ENCODE measurements at regions of chr19 and their contacts with region 1.

Region 1: GRCh38 chr19:10251792-10252694 is at the start of gene MRPL4:
- DNase-seq: peak; percentile 97
- ATAC-seq: peak; percentile 94
- H3K4me3 ChIP-seq: peak within 1 kb of the TSS; percentile 98 to 99
- H3K27ac ChIP-seq: peak within 1 kb of the TSS; percentile 82
- H3K4me1 ChIP-seq: peaks cover 7 to 32% of the 10 kb centered on the region in 2 experiments; a peak in 3 of 4 replicates
- H3K27me3 ChIP-seq: no peaks in the 10 kb centered on the region
- CTCF ChIP-seq: no peak
- POLR2A ChIP-seq: no peak
- RAD21 ChIP-seq: no peak
- total RNA-seq, gene MRPL4: 146 TPM

Region 2: GRCh38 chr19:10095948-10096621 is 156.0 kb before region 1 on chr19:
- CTCF ChIA-PET with region 1: interaction called, 9 read pairs
- POLR2A ChIA-PET with region 1: interaction called, 3 read pairs
- RAD21 ChIA-PET with region 1: interaction called in 1 of 2 experiments, 3 read pairs
- intact Hi-C with region 1: loop called (anchors 1 kb)
- DNase-seq: peak; percentile 75
- ATAC-seq: peak; percentile 89
- H3K4me3 ChIP-seq: no peak overlapping the region
- H3K27ac ChIP-seq: peak overlapping the region; percentile 44; the same call in 1 of the 2 replicates
- H3K4me1 ChIP-seq: peaks cover 11 to 16% of the 10 kb centered on the region in 2 experiments
- H3K27me3 ChIP-seq: no peaks in the 10 kb centered on the region
- CTCF ChIP-seq: no peak
- POLR2A ChIP-seq: peak; percentile 66
- RAD21 ChIP-seq: no peak

Region 3: DNA sequence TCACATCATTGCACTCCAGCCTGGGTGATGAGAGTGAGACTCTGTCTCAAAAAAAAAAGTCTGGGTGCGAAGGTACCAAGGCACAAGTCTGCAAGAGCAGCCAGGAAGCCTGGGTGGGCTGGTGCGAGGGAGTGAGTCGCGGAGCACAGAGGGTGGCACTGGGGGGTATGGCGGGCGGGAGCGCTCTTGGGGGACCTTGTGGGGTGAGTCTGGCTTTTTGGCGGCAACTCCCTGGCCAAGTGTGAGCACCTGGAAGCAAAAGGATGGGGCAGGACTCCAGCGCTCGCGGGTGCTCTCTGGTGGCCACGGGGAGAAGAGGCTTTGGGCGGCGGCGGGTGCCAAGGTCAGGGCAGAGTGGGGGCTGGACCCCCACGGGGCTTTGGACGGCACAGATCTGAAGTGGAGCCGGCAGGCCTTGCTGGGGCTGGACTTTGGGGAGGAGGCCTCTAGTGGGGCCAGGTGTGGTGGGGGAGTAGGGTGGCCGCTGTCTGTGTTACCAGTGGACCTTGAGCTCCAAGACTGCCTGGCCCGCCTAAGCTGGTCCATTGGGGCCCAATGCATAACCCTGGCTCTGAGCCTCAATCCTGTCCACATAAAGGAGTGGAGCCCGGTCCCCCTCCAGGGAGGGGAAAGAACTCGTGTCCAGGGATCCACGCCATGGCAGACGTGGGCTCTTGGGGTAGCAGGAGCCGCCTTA is 139.0 kb before region 1 on chr19:
- CTCF ChIA-PET with region 1: interaction called, 10 read pairs
- POLR2A ChIA-PET with region 1: no interaction called
- RAD21 ChIA-PET with region 1: no interaction called
- intact Hi-C with region 1: no loop called
- DNase-seq: no peak
- ATAC-seq: peak; percentile 70
- H3K4me3 ChIP-seq: no peak overlapping the region
- H3K27ac ChIP-seq: peak overlapping the region; percentile 63
- H3K4me1 ChIP-seq: peaks cover 0 to 36% of the 10 kb centered on the region in 2 experiments; a peak in 2 of 4 replicates
- H3K27me3 ChIP-seq: no peaks in the 10 kb centered on the region
- CTCF ChIP-seq: peak in 2 of 3 experiments; percentile 80 to 86; a peak in 4 of 6 replicates
- POLR2A ChIP-seq: no peak
- RAD21 ChIP-seq: no peak; the same call in 1 of the 2 replicates

Region 4: GRCh38 chr19:10120538-10121189 is 131.4 kb before region 1 on chr19:
- CTCF ChIA-PET with region 1: interaction called, 3 read pairs
- POLR2A ChIA-PET with region 1: interaction called, 3 read pairs
- RAD21 ChIA-PET with region 1: interaction called in 1 of 2 experiments, 9 read pairs
- intact Hi-C with region 1: loop called (anchors 2 kb)
- DNase-seq: no peak
- ATAC-seq: no peak
- H3K4me3 ChIP-seq: no peak overlapping the region
- H3K27ac ChIP-seq: no peak overlapping the region
- H3K4me1 ChIP-seq: peaks cover 5 to 16% of the 10 kb centered on the region in 2 experiments
- H3K27me3 ChIP-seq: no peaks in the 10 kb centered on the region
- CTCF ChIP-seq: no peak
- POLR2A ChIP-seq: no peak
- RAD21 ChIP-seq: no peak

Region 5: GRCh38 chr19:10194500-10195289 is 57.3 kb before region 1 on chr19 and contains the start of gene DNMT1:
- CTCF ChIA-PET with region 1: interaction called, 3 read pairs
- POLR2A ChIA-PET with region 1: no interaction called
- RAD21 ChIA-PET with region 1: interaction called, 4 read pairs
- intact Hi-C with region 1: loop called (anchors 2 kb)
- DNase-seq: peak; percentile 94
- ATAC-seq: peak; percentile 95
- H3K4me3 ChIP-seq: peak within 1 kb of the TSS; percentile 88 to 98
- H3K27ac ChIP-seq: peak within 1 kb of the TSS; percentile 85
- H3K4me1 ChIP-seq: peaks cover 11 to 16% of the 10 kb centered on the region in 2 experiments; a peak in 2 of 4 replicates
- H3K27me3 ChIP-seq: no peaks in the 10 kb centered on the region
- CTCF ChIP-seq: no peak
- POLR2A ChIP-seq: peak; percentile 85
- RAD21 ChIP-seq: no peak
- total RNA-seq, gene DNMT1: 235 TPM

Region 6: GRCh38 chr19:10219678-10220077 is 32.4 kb before region 1 on chr19:
- CTCF ChIA-PET with region 1: no interaction called
- POLR2A ChIA-PET with region 1: interaction called, 3 read pairs
- RAD21 ChIA-PET with region 1: no interaction called
- intact Hi-C with region 1: loop called (anchors 1 kb)
- DNase-seq: no peak
- ATAC-seq: peak; percentile 85
- H3K4me3 ChIP-seq: no peak overlapping the region
- H3K27ac ChIP-seq: no peak overlapping the region
- H3K4me1 ChIP-seq: peaks cover 0 to 2% of the 10 kb centered on the region in 2 experiments; a peak in 2 of 4 replicates
- H3K27me3 ChIP-seq: no peaks in the 10 kb centered on the region
- CTCF ChIP-seq: peak; percentile 11 to 61 (median 49); a peak in 5 of 6 replicates
- POLR2A ChIP-seq: no peak
- RAD21 ChIP-seq: peak; percentile 27; the same call in 1 of the 2 replicates

Region 7: GRCh38 chr19:10644260-10645007 is 392.4 kb after region 1 on chr19:
- CTCF ChIA-PET with region 1: no interaction called
- POLR2A ChIA-PET with region 1: no interaction called
- RAD21 ChIA-PET with region 1: no interaction called
- intact Hi-C with region 1: no loop called
- DNase-seq: peak; percentile 35
- ATAC-seq: peak; percentile 95
- H3K4me3 ChIP-seq: no peak overlapping the region
- H3K27ac ChIP-seq: peak overlapping the region; percentile 25; the same call in 1 of the 2 replicates
- H3K4me1 ChIP-seq: peaks cover 5 to 13% of the 10 kb centered on the region in 2 experiments; a peak in 3 of 4 replicates
- H3K27me3 ChIP-seq: no peaks in the 10 kb centered on the region
- CTCF ChIP-seq: peak; percentile 83 to 97 (median 85)
- POLR2A ChIP-seq: no peak
- RAD21 ChIP-seq: peak; percentile 96